Activated CD4-positive, alpha-beta memory T cell treated with anti-CD3 and anti-CD28 coated beads for 36 hours (primary cell): ENCODE measurements at regions of chr15 and their contacts with region 1.

Region 1: DNA sequence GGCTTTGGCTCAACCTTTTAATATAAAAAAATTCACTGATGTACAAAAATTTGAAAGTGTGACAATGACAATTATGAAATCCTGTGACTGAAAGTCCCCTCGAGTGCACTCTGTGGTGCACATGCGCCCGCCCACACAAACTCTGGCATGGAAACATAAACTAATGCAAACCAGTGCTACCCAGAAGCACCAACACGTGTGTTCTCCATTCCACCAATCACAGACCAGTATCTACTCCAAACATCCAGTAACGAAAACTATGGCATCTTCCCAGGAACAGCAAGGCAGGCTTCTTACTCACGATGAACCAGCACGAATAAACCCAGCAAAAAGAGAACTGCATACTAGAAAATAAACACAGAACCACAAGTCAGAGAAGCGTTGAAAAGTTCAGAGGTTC is 11.7 kb upstream of the NMB start:
- DNase-seq: peak; percentile 76
- H3K4me3 Mint-ChIP-seq: no peak overlapping the region
- H3K27ac Mint-ChIP-seq: peak overlapping the region; percentile 79
- H3K4me1 Mint-ChIP-seq: peaks cover 60% of the 10 kb centered on the region
- H3K27me3 Mint-ChIP-seq: no peaks in the 10 kb centered on the region

Region 2: GRCh38 chr15:84633311-84634227 is 36.2 kb before region 1 on chr15:
- CTCF ChIA-PET with region 1: interaction called, 3 read pairs
- POLR2A ChIA-PET with region 1: no interaction called
- intact Hi-C with region 1: loop called (anchors 1 kb)
- DNase-seq: peak; percentile 73
- H3K4me3 Mint-ChIP-seq: peak overlapping the region; percentile 98
- H3K27ac Mint-ChIP-seq: peak overlapping the region; percentile 96
- H3K4me1 Mint-ChIP-seq: peaks cover 47% of the 10 kb centered on the region
- H3K27me3 Mint-ChIP-seq: no peaks in the 10 kb centered on the region

Region 3: GRCh38 chr15:84685304-84685703 is 15.6 kb after region 1 on chr15:
- CTCF ChIA-PET with region 1: interaction called, 4 read pairs
- POLR2A ChIA-PET with region 1: interaction called, 3 read pairs
- intact Hi-C with region 1: loop called (anchors 1 kb)
- DNase-seq: no peak
- H3K4me3 Mint-ChIP-seq: no peak overlapping the region
- H3K27ac Mint-ChIP-seq: no peak overlapping the region
- H3K4me1 Mint-ChIP-seq: peaks cover 36% of the 10 kb centered on the region
- H3K27me3 Mint-ChIP-seq: no peaks in the 10 kb centered on the region

Region 4: DNA sequence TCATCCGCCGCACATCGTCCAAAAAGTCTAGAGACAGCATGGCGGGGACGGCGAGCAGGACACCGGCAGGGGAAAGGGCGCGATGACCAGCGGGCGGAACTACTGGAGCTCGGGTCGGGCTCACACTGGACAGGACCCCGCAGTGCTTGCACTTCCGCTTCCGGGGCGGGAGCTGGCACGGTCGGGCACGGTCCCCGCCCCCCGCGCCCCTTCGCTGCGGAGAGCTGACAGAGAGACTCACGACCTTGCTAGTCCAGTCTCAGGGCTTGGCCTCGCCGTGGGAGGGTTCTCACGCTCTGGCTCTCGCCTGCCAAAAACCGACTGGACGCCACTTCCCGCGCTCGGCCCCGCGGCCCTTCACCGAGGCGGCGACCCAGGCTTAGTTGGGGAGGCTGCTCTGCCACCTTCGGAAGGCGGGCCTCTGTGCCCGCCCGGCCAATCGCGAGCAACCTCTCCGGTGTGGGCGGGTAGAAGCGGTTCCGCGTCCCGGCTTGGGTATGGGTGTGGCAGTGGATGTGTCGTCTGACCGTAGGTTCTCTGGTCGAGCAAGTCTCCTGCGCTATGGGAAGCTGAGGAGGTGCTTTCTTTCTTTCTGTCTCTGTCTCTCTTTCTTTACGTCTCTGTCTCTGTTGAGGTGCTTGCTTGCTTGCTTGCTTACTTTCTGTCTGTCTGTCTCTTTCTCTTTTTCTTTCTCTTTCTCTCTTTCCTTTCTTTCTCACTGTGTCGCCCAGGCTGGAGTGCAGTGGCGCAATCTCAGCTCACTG is 46.5 kb after region 1 on chr15 and contains the start of gene SEC11A:
- CTCF ChIA-PET with region 1: interaction called, 8 read pairs
- POLR2A ChIA-PET with region 1: interaction called, 9 read pairs
- intact Hi-C with region 1: loop called (anchors 1 kb)
- DNase-seq: peak; percentile 96
- H3K4me3 Mint-ChIP-seq: peak within 1 kb of the TSS; percentile 92
- H3K27ac Mint-ChIP-seq: peak within 1 kb of the TSS; percentile 93
- H3K4me1 Mint-ChIP-seq: peaks cover 46% of the 10 kb centered on the region
- H3K27me3 Mint-ChIP-seq: no peaks in the 10 kb centered on the region
- total RNA-seq, gene SEC11A: 132 to 136 TPM

Region 5: GRCh38 chr15:84761607-84762131 is 91.9 kb after region 1 on chr15:
- CTCF ChIA-PET with region 1: no interaction called
- POLR2A ChIA-PET with region 1: interaction called, 3 read pairs
- intact Hi-C with region 1: loop called (anchors 1 kb)
- DNase-seq: no peak
- H3K4me3 Mint-ChIP-seq: no peak overlapping the region
- H3K27ac Mint-ChIP-seq: no peak overlapping the region
- H3K4me1 Mint-ChIP-seq: peaks cover 22% of the 10 kb centered on the region
- H3K27me3 Mint-ChIP-seq: no peaks in the 10 kb centered on the region